ENCODE measurements at regions of chr10 and their contacts with region 1.

Region 1: DNA sequence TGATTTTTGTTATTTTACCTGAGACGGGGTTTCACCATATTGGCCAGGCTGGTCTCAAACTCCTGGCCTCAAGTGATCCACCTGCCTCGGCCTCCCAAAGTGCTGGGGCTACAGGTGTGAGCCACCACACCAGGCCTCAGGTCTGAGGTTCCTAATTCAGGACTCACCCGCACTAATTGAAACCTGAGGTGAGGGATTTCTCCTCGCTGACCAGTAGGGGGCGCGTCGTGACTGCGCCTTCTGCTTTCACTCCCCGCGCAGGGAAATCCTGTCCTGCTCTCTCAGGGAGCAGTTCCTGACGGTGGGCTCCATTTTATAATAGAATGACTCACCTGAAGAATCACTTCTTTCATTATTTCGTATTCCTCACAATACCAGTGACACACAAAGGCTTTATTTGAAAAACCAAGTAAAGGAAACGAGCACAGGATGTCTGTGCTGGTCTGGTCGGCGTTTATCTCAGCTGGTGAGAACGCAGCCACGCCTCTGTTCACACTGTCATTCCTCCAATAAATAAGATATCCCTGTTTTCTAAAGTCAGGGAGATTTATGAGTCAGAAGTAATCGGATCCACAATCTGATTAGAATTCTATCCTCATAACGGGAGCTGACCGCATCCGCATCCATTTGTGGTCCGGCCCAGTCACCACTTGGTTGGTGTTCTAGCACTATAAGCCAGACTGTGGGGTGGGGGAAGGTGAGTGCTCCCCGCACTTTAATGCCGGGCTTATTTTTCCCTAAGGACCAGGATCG is 35.4 kb downstream of the BAG3 start:
- DNase-seq: peak; percentile 85
- ATAC-seq: peak; percentile 93
- H3K4me3 Mint-ChIP-seq: peak overlapping the region; percentile 58
- H3K27ac Mint-ChIP-seq: peak overlapping the region; percentile 66
- H3K4me1 Mint-ChIP-seq: peaks cover 27% of the 10 kb centered on the region
- H3K27me3 Mint-ChIP-seq: peaks cover 6% of the 10 kb centered on the region

Region 2: DNA sequence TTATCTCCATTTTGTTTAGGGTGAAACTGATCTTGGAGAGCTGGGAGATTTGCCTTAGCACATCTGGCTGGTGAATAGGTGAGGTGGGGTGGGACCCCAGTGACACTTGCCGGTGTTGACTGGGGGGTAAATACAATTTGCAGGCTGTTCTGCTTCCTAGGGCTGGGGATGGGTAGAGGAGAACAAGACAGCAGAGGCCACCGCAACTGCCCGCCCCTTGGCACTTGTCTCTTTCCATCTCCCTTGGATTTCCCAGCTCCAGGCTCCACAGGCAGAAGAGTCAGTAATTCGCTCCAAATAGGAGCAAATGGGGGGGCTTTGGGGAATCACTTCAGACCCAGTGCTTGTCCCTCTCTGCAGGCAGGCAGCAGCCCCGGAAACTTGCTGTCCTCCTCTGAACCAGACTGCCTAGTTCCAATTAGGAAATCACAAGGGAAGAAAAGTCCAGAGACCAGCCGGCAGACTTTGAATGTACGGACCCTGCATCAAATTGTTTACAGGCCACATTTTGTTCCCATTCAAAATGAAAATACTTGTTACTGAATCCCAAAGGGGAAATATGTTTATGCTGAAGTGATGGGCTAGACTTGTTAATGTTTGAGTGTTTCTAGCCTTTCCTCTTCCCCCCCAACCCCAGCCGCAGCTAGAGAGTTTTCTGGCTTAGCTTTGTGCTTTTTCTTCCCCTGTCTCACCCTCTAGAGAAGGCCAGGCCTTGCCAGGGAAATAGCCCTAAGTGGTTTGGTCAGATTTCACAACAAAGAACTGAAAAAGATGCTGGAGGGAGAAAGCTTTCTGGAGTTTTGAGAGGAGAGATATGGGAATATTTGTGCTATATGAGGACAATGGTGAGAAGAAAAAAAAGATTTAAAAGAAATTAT is 29.3 kb after region 1 on chr10:
- CTCF ChIA-PET with region 1: interaction called, 22 read pairs
- DNase-seq: no peak
- ATAC-seq: no peak
- H3K4me3 Mint-ChIP-seq: no peak overlapping the region
- H3K27ac Mint-ChIP-seq: no peak overlapping the region
- H3K4me1 Mint-ChIP-seq: no peaks in the 10 kb centered on the region
- H3K27me3 Mint-ChIP-seq: no peaks in the 10 kb centered on the region

Region 3: DNA sequence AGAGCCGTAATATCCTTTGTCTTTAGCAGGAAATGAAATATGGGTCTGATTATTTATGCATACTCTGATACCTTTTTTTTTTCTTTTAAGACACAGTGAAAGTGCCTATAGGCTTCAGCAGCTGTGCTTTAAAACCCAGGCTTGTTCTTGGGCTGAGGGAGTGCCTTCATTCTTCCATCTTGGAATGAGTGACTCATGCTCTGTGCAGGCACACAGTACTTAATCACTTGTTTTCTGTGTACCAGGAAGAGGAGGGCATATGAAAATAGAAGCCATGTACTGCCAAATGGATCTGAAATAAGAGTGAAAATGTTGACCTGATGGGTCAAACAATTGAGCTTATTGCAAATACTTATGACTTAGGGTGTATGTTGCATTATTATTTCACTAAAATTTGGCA is 51.2 kb after region 1 on chr10:
- CTCF ChIA-PET with region 1: interaction called, 12 read pairs
- DNase-seq: no peak
- ATAC-seq: no peak
- H3K4me3 Mint-ChIP-seq: no peak overlapping the region
- H3K27ac Mint-ChIP-seq: no peak overlapping the region
- H3K4me1 Mint-ChIP-seq: peaks cover 18% of the 10 kb centered on the region
- H3K27me3 Mint-ChIP-seq: no peaks in the 10 kb centered on the region

Region 4: DNA sequence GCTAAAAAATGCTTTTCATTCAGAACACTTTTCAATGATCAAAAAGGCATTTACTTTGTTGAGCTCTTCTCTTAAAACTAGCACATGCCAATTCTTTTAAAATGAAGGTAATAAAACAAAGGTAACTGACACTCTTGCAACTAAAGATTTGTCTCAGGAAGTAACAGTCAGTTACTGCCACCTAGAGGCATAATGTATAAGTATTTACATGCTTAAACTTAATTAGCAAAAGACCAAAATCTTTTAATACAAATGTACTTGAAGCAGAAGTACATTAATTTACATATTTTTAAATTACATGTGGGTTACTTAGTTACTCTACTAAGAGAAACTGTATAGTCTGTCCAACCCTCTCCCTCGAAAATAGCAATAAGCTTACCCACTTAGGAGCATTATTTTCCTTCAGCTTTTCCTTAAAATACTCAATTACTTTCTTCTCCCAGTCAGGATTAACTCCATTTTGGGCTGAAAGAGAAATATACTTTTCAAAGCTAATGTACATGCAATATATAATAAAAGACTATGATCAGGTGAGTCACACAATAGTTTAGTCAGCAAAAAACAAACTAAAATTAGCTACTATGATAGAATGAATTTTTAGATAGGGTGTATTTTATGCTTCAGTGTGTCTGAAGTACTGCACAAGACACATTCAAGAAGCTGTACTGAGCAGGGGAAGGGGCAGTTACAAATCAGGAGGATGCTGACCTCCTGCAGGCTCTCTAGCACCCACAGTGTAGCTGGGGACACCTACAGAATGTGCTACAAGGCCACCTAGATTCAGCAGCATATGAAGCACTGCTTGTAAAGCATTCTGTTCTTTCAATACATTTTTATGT is 173.0 kb after region 1 on chr10:
- CTCF ChIA-PET with region 1: interaction called, 43 read pairs
- DNase-seq: no peak
- ATAC-seq: peak; percentile 27
- H3K4me3 Mint-ChIP-seq: no peak overlapping the region
- H3K27ac Mint-ChIP-seq: peak overlapping the region; percentile 36
- H3K4me1 Mint-ChIP-seq: peaks cover 44% of the 10 kb centered on the region
- H3K27me3 Mint-ChIP-seq: no peaks in the 10 kb centered on the region